ENCODE measurements at regions of chr7 and their contacts with region 1.

Region 1: GRCh38 chr7:90155206-90155605 is 937 bp downstream of the STEAP1 start:
- DNase-seq: no peak
- ATAC-seq: no peak
- H3K4me3 ChIP-seq: peak overlapping the region in 1 of 4 donors; percentile 62
- H3K27ac ChIP-seq: no peak overlapping the region
- H3K4me1 ChIP-seq: no peaks in the 10 kb centered on the region
- H3K27me3 ChIP-seq: no peaks in the 10 kb centered on the region
- CTCF ChIP-seq: no peak

Region 2: DNA sequence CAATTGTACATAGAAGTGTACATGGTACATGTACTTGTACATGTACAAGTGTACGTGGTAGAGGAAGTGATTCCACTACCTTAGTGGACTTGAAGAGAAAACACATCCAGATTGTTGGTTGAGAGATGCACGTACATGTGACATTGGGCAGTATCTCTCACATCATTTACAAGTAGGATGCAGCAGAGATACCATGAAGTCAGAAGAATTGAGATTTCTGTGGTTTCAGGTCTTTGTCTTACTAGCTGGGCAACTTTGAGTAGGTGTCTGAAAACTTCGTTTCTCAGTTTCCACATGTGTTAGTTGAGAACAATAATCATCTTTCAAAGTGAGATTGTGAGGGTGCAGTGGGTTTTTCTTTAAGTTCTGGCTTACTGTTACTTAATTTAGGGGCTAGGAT is 269.5 kb after region 1 on chr7:
- intact Hi-C with region 1: loop called in 1 of 3 experiments (anchors 10 kb)
- DNase-seq: no peak
- ATAC-seq: no peak
- H3K4me3 ChIP-seq: no peak overlapping the region
- H3K27ac ChIP-seq: no peak overlapping the region
- H3K4me1 ChIP-seq: no peaks in the 10 kb centered on the region
- H3K27me3 ChIP-seq: no peaks in the 10 kb centered on the region
- CTCF ChIP-seq: no peak

Region 3: DNA sequence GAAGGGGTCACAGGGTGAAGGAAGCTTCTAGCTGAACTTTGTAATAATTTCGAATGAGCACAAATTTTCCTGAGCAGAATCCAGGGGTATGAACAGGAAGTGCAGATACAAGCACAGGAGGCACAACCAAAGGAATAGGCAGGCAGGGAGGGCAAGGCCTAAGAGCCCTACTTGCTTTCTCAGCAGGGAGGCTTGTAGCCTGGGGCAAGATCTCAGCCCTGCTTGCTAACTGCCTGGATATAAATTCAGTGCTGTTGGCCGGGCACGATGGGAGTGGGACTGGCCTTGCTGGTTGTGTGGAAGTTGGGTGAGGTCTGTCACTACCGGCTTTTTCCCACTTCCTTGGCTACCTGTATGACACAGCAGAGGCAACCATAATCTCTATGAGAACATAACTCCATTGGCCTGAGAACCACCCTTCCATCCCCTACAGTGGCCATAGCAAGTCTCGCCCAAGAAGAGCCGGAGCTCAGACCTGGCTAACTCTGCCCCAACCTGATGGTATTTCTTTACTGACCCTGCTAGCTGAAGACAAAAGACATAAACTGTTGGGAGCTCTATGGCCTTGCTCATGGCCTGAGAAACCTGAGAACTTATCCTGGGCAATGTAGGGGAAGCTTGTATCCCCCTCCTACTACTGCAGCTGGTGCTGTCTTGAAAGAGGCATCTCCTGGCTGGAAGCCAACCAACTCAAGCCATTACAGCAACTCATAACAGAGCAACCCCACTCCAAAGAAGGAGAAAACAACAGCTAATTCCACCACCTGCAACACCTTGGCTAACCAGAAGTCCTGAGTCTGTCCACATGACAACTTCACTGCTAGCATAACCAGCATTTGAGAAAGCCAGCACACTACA is 275.6 kb after region 1 on chr7:
- intact Hi-C with region 1: loop called in 2 of 3 experiments (anchors 5 to 10 kb)
- DNase-seq: no peak
- ATAC-seq: no peak
- H3K4me3 ChIP-seq: no peak overlapping the region
- H3K27ac ChIP-seq: no peak overlapping the region
- H3K4me1 ChIP-seq: no peaks in the 10 kb centered on the region
- H3K27me3 ChIP-seq: no peaks in the 10 kb centered on the region
- CTCF ChIP-seq: no peak